ENCODE measurements at regions of chr4 and their contacts with region 1.

Region 1: DNA sequence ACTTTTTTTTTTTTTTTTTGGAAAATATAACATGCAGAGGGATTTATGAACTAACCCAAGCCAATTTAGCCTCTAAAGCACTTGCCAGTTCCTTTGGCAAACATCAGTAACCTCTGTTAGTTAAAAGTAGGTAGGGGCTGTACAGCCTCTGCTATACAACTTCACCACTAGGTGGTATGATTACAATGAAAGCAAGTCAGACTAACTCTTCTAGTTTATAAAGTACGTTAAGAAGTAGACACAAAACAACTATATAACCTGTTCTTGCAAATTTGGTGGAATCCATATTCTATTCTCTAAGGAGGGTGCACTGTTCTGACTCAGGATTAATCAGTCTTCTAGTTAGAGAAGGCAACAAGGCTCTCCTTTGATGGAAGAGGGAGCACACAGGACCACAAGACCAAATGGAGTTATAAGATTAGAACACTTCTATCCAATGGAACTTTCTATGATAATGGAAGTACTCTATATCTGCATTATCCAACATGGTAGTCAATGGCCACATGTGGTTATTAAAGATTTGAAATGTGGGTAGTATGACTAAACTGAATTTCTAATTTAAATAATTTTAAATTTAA is 12.8 kb downstream of the AIMP1 start:
- DNase-seq: peak; percentile 69
- H3K4me3 ChIP-seq: no peak overlapping the region
- H3K27ac ChIP-seq: no peak overlapping the region
- H3K4me1 ChIP-seq: peaks cover 9% of the 10 kb centered on the region
- H3K27me3 ChIP-seq: no peaks in the 10 kb centered on the region
- CTCF ChIP-seq: peak; percentile 39 to 64
- POLR2A ChIP-seq: no peak

Region 2: DNA sequence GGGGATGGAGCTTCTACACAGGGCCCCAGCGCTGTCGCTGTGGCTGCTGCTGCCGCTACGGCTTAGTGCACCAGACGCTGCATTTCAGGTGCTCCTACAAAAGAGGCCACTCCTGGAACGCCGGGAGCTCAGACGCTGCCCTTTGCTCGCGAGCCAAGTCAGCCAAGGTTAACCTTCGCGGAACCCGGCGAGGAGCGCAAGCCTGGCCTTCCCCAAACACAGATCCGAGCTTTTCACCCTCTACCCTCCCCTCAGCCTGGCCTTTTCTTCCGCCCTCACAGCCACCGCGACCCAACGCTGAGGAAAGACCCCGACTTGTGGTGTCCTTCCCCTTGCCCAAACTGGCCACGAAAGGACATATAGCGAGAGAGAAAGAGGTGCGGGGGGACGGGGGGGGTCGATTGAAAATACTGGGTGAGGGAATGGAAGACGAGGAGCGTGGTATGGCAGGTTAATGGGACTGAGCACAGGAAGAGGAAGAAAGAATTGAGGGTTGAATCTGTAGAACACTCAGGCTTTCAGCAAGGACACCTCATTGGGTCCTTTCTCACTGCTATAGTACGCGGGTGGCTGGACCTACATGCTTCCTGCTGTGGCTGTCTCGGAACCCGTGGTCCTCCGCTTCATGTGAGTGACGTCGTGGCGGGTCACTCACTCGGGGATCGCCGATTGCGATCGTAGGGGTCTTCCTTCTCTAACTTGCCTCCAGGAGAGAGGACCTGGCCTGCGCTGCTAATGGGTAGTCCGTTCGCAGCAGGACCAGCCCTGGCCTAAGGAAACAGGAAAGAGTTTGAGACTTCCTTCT is 13.0 kb before region 1 on chr4 and contains the starts of genes AIMP1 and TBCK:
- CTCF ChIA-PET with region 1: interaction called, 18 read pairs
- POLR2A ChIA-PET with region 1: no interaction called
- dilution Hi-C with region 1: no loop called
- intact Hi-C with region 1: no loop called
- DNase-seq: peak; percentile 92
- H3K4me3 ChIP-seq: peak within 1 kb of the TSS; percentile 49 to 96 (median 83)
- H3K27ac ChIP-seq: peak within 1 kb of the TSS; percentile 92
- H3K4me1 ChIP-seq: peaks cover 20% of the 10 kb centered on the region
- H3K27me3 ChIP-seq: no peaks in the 10 kb centered on the region
- CTCF ChIP-seq: no peak
- POLR2A ChIP-seq: peak; percentile 78
- total RNA-seq, gene AIMP1: 42.4 and 44.7 TPM in 2 replicates
- total RNA-seq, gene TBCK: 29.0 and 38.6 TPM in 2 replicates

Region 3: GRCh38 chr4:106344647-106344970 is 15.5 kb after region 1 on chr4:
- CTCF ChIA-PET with region 1: interaction called, 10 read pairs
- POLR2A ChIA-PET with region 1: no interaction called
- dilution Hi-C with region 1: no loop called
- intact Hi-C with region 1: no loop called
- DNase-seq: no peak
- H3K4me3 ChIP-seq: no peak overlapping the region
- H3K27ac ChIP-seq: no peak overlapping the region
- H3K4me1 ChIP-seq: no peaks in the 10 kb centered on the region
- H3K27me3 ChIP-seq: no peaks in the 10 kb centered on the region
- CTCF ChIP-seq: no peak
- POLR2A ChIP-seq: no peak

Region 4: GRCh38 chr4:106809076-106809475 is 479.9 kb after region 1 on chr4:
- CTCF ChIA-PET with region 1: interaction called, 55 read pairs
- POLR2A ChIA-PET with region 1: no interaction called
- dilution Hi-C with region 1: no loop called
- intact Hi-C with region 1: loop called (anchors 1 kb)
- DNase-seq: peak; percentile 66
- H3K4me3 ChIP-seq: no peak overlapping the region
- H3K27ac ChIP-seq: no peak overlapping the region
- H3K4me1 ChIP-seq: no peaks in the 10 kb centered on the region
- H3K27me3 ChIP-seq: no peaks in the 10 kb centered on the region
- CTCF ChIP-seq: peak; percentile 27 to 30
- POLR2A ChIP-seq: no peak

Region 5: DNA sequence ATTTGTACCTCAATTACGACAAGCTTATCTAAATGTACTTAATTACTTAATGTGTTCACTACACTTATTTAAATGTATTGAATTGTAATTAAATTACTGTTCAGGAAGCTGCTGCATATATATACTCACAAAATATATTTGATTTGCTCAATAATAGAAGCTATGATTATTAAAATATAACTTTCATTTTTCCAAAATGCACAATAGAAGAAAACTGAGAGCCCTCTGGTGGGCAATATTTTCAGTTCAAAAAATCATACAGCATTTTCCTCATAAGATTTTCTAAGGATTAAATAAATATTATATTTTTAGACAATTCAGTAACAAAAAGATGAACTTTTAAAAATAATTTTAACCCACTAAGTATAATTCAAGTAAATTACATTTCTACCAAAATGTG is 489.6 kb after region 1 on chr4:
- CTCF ChIA-PET with region 1: interaction called, 11 read pairs
- POLR2A ChIA-PET with region 1: no interaction called
- dilution Hi-C with region 1: no loop called
- intact Hi-C with region 1: no loop called
- DNase-seq: no peak
- H3K4me3 ChIP-seq: no peak overlapping the region
- H3K27ac ChIP-seq: no peak overlapping the region
- H3K4me1 ChIP-seq: no peaks in the 10 kb centered on the region
- H3K27me3 ChIP-seq: no peaks in the 10 kb centered on the region
- CTCF ChIP-seq: no peak
- POLR2A ChIP-seq: no peak

Region 6: GRCh38 chr4:106898621-106899230 is 569.6 kb after region 1 on chr4:
- CTCF ChIA-PET with region 1: interaction called, 52 read pairs
- POLR2A ChIA-PET with region 1: no interaction called
- dilution Hi-C with region 1: no loop called
- intact Hi-C with region 1: loop called (anchors 1 kb)
- DNase-seq: peak; percentile 61
- H3K4me3 ChIP-seq: no peak overlapping the region
- H3K27ac ChIP-seq: no peak overlapping the region
- H3K4me1 ChIP-seq: no peaks in the 10 kb centered on the region
- H3K27me3 ChIP-seq: no peaks in the 10 kb centered on the region
- CTCF ChIP-seq: peak; percentile 65 to 69
- POLR2A ChIP-seq: no peak